ENCODE measurements at regions of chr3 and their contacts with region 1.

Region 1: GRCh38 chr3:148379763-148380382 is 317.8 kb upstream of the AGTR1 start:
- DNase-seq: peak; percentile 19 to 79
- ATAC-seq: peak; percentile 96 to 99
- H3K4me3 ChIP-seq: no peak overlapping the region
- H3K27ac ChIP-seq: no peak overlapping the region
- H3K4me1 ChIP-seq: no peaks in the 10 kb centered on the region
- CTCF ChIP-seq: peak; percentile 83
- EP300 ChIP-seq: no peak
- POLR2A ChIP-seq: no peak
- RAD21 ChIP-seq: peak; percentile 91 to 92

Region 2: DNA sequence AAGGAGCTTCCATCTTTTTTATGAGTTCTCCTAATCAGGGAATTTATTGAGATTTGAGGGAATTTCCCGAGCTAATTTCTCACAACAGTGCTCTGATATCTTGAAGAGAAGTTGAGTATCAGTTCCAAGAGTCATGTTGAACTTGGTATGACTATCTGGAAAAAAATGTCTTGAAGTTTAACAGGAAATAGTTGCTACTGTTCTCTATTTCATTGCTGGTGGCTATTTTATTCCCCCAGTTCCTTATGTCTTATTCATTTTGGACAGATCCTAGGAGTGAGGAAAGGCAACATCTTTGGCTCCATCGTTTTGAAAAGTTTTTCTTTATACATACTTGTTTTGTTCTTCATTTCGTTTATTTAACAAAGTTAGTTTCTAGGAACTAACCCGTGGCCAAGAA is 10.0 kb after region 1 on chr3:
- CTCF ChIA-PET with region 1: interaction called, 11 read pairs
- POLR2A ChIA-PET with region 1: no interaction called
- DNase-seq: no peak
- ATAC-seq: no peak
- H3K4me3 ChIP-seq: no peak overlapping the region
- H3K27ac ChIP-seq: no peak overlapping the region
- H3K4me1 ChIP-seq: no peaks in the 10 kb centered on the region
- CTCF ChIP-seq: no peak
- EP300 ChIP-seq: no peak
- POLR2A ChIP-seq: no peak
- RAD21 ChIP-seq: no peak

Region 3: GRCh38 chr3:148631124-148631903 is 251.4 kb after region 1 on chr3:
- CTCF ChIA-PET with region 1: interaction called, 14 read pairs
- POLR2A ChIA-PET with region 1: no interaction called
- DNase-seq: peak in 1 of 2 experiments; percentile 36
- ATAC-seq: peak; percentile 39 to 74; a peak in 5 of 6 replicates
- H3K4me3 ChIP-seq: no peak overlapping the region
- H3K27ac ChIP-seq: peak overlapping the region in 1 of 2 experiments; percentile 34; a peak in 2 of 6 replicates
- H3K4me1 ChIP-seq: no peaks in the 10 kb centered on the region
- CTCF ChIP-seq: peak; percentile 41
- EP300 ChIP-seq: no peak
- POLR2A ChIP-seq: no peak
- RAD21 ChIP-seq: peak; percentile 73 to 78

Region 4: GRCh38 chr3:148718982-148719862 is 339.3 kb after region 1 on chr3:
- CTCF ChIA-PET with region 1: interaction called, 83 read pairs
- POLR2A ChIA-PET with region 1: no interaction called
- DNase-seq: peak in 1 of 2 experiments; percentile 32
- ATAC-seq: peak in 1 of 2 experiments; percentile 60; a peak in 3 of 6 replicates
- H3K4me3 ChIP-seq: no peak overlapping the region
- H3K27ac ChIP-seq: no peak overlapping the region
- H3K4me1 ChIP-seq: peaks cover 24% of the 10 kb centered on the region
- CTCF ChIP-seq: peak; percentile 76
- EP300 ChIP-seq: no peak
- POLR2A ChIP-seq: no peak
- RAD21 ChIP-seq: peak; percentile 80 to 85

Region 5: DNA sequence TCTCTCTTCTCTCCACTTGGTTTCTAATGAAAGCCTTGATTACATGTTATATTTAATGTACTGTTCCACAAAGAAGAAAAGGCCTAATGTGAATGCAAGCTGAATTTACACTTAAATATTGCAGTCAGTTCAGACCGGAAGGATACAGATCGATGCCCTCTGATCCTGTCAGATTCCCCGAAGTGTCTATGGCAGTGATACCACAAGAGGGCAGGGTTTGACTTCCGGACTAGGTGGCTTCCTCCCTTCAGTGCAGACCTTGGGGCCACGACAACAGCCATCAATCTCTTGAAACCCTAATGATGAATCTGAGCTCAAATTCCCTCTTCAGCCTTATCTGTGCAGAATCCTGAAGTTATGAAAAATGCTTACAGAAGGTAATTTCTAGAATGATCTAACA is 347.4 kb after region 1 on chr3:
- CTCF ChIA-PET with region 1: interaction called, 17 read pairs
- POLR2A ChIA-PET with region 1: no interaction called
- DNase-seq: peak; percentile 23 to 62
- ATAC-seq: peak; percentile 74 to 93; a peak in 5 of 6 replicates
- H3K4me3 ChIP-seq: no peak overlapping the region
- H3K27ac ChIP-seq: no peak overlapping the region
- H3K4me1 ChIP-seq: peaks cover 12% of the 10 kb centered on the region; the same call in 2 of the 3 replicates
- CTCF ChIP-seq: peak; percentile 56
- EP300 ChIP-seq: no peak
- POLR2A ChIP-seq: no peak
- RAD21 ChIP-seq: peak; percentile 64 to 67

Region 6: DNA sequence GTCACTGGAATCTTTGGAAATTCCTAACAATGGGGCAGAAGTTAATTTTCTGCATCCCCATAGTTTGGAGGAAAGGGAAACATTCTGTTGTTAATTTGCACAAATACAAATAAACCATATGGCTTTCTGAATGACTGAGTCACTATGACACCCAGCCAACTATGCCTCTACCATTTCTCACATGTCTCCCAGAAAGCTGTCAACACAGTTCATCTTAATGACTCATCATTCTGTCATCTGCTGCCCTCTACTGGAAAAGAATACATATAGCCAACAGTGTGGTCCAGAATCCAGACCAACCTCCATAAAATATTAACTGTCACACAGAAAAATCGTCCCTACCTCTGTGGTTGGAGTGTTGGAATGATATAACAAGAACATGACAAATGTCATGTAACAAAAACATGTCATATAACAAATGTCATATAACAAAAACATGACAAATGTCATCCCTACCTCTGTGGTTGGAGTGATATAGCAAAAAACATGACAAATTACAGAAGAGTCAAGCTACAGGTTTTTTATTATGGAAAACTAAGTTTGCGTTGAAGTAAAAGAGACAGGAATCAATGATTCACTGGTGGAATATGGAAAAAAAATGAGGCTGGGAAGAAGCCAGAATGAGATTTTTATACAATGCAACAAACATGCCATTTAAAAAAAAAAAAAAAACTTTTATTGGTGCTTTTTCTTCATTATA is 563.8 kb after region 1 on chr3:
- CTCF ChIA-PET with region 1: interaction called, 43 read pairs
- POLR2A ChIA-PET with region 1: no interaction called
- DNase-seq: peak; percentile 83 to 88
- ATAC-seq: peak; percentile 90 to 97
- H3K4me3 ChIP-seq: no peak overlapping the region
- H3K27ac ChIP-seq: no peak overlapping the region
- H3K4me1 ChIP-seq: peaks cover 8% of the 10 kb centered on the region; the same call in 2 of the 3 replicates
- CTCF ChIP-seq: peak; percentile 87
- EP300 ChIP-seq: no peak
- POLR2A ChIP-seq: no peak
- RAD21 ChIP-seq: peak; percentile 84 to 85

Region 7: GRCh38 chr3:148955544-148956346 is 575.9 kb after region 1 on chr3:
- CTCF ChIA-PET with region 1: interaction called, 10 read pairs
- POLR2A ChIA-PET with region 1: no interaction called
- DNase-seq: peak; percentile 19 to 72
- ATAC-seq: peak; percentile 76 to 88
- H3K4me3 ChIP-seq: no peak overlapping the region
- H3K27ac ChIP-seq: peak overlapping the region; percentile 7 to 53; a peak in 4 of 6 replicates
- H3K4me1 ChIP-seq: peaks cover 5% of the 10 kb centered on the region; the same call in 2 of the 3 replicates
- CTCF ChIP-seq: peak; percentile 89
- EP300 ChIP-seq: no peak
- POLR2A ChIP-seq: no peak
- RAD21 ChIP-seq: peak; percentile 89 to 93

Measured in A549 (cell line).